PC-3 (cell line): ENCODE measurements at regions of chr1 and their contacts with region 1.

Region 1: DNA sequence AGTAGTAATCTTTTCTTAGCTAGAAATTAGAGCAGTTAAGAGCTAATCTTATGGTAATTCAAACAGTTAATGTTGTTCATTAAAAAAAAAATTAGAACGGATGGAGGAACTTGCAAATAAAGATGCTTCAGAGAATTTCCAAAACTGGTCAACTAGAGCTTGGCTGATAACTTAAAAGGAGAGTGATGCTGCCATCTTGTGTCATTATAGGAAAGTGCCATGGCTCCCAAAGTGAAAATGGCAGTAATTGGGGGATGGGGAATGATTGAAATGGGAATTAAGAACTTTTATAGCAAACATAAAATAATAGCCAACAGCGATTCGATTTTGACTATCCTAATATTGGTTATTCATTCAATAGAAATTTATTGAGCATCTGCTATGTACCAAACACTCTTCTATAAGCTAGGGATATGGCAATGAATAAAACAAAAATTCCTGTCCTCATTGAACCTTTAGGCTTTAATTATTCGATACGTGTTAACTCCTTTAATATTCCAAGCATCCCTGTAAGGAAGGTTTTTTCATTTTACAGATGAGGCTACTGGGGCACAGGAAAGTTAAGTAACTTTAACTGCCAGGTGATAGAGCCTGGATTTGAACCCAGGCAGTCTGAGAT is 5.7 kb upstream of the PLPP3 start:
- DNase-seq: peak; percentile 78
- ATAC-seq: peak; percentile 61
- H3K4me3 ChIP-seq: no peak overlapping the region
- H3K27ac ChIP-seq: no peak overlapping the region
- H3K4me1 ChIP-seq: peaks cover 5% of the 10 kb centered on the region; the same call in 1 of the 2 replicates
- H3K27me3 ChIP-seq: no peaks in the 10 kb centered on the region
- CTCF ChIP-seq: peak; percentile 90

Region 2: GRCh38 chr1:55140546-55140983 is 1444.5 kb before region 1 on chr1:
- CTCF ChIA-PET with region 1: no interaction called
- POLR2A ChIA-PET with region 1: no interaction called
- intact Hi-C with region 1: loop called (anchors 2 kb)
- DNase-seq: peak; percentile 92
- ATAC-seq: peak; percentile 97
- H3K4me3 ChIP-seq: no peak overlapping the region
- H3K27ac ChIP-seq: no peak overlapping the region
- H3K4me1 ChIP-seq: peaks cover 5% of the 10 kb centered on the region; the same call in 1 of the 2 replicates
- H3K27me3 ChIP-seq: no peaks in the 10 kb centered on the region
- CTCF ChIP-seq: peak; percentile 90

Region 3: DNA sequence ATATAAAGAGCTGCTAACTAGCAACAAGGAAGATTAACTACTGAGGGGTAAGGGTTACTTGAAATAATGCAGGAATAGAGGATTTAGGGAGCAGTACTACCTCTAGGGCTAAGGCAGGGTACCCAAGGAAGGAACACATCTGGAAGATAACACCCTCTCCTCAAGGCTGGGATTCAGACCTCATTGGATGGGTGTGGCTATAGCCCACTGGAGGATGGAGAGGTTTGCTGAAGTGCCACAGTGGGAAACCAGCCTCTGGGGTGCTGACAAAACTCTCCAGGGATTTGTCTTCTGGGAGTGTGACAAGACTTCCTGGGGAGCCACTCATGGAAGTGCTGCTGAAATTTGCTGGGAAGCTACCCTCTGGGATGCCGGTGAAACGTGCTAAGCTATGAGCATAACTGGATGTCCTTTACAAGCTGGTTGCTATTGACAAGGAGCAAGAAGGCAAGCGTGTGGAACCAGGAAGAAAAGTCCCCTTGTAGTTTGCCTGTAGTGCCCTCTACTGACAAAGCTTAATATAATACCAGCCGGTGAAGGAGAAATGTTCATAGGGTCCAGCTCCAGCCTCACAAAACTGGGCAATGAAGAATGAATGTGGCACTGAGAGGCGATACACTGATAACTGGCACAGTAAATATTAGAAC is 1247.1 kb before region 1 on chr1:
- CTCF ChIA-PET with region 1: no interaction called
- POLR2A ChIA-PET with region 1: no interaction called
- intact Hi-C with region 1: loop called (anchors 1 kb)
- DNase-seq: peak; percentile 72
- ATAC-seq: peak; percentile 83
- H3K4me3 ChIP-seq: no peak overlapping the region
- H3K27ac ChIP-seq: no peak overlapping the region
- H3K4me1 ChIP-seq: no peaks in the 10 kb centered on the region
- H3K27me3 ChIP-seq: no peaks in the 10 kb centered on the region
- CTCF ChIP-seq: peak; percentile 72

Region 4: DNA sequence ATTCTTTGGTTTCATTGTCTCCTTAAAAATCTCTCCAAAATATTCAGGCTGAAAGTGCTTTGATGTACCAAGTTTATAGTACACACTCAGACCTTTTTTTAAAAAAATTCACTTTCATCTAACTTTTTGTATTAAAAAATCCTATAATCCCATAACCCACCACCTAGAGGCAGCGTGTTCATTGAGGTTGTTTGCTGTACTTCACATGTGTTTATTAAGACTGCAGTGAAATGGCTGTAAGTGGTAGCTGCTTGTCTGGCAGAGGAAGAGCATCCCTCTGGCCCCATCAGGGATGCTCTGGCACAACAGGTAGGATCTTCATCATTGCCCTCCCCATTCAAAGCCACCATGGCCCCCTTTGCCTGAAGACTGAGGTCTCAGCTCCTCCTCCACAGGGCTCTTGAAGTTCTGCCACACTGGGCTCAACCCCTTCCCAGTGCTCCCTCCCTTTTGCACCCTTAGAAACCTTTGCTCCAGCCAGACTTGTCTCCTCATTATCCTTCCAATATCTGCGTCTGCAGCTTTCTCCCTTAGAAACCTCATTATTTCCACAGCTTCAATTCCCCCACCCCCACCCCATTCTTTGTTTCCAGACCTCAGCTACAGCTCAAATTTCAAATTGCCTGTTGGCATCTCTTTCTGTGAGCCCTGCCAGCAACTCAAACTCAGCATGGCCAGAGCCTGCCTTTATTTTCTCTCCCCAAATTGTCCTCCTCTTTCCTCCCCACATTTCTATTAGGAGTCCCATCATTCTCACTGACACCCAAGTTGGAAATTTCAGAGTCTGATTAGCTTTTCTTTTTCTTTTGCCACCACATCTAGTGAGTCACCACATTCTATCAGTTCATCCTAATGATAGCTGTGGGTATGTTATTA is 1000.3 kb before region 1 on chr1:
- CTCF ChIA-PET with region 1: no interaction called
- POLR2A ChIA-PET with region 1: no interaction called
- intact Hi-C with region 1: loop called (anchors 10 kb)
- DNase-seq: peak; percentile 29
- ATAC-seq: peak; percentile 50
- H3K4me3 ChIP-seq: no peak overlapping the region
- H3K27ac ChIP-seq: no peak overlapping the region
- H3K4me1 ChIP-seq: peaks cover 22% of the 10 kb centered on the region
- H3K27me3 ChIP-seq: no peaks in the 10 kb centered on the region
- CTCF ChIP-seq: peak; percentile 50

Region 5: GRCh38 chr1:56291374-56291919 is 293.6 kb before region 1 on chr1:
- CTCF ChIA-PET with region 1: no interaction called
- POLR2A ChIA-PET with region 1: no interaction called
- intact Hi-C with region 1: no loop called
- DNase-seq: no peak
- ATAC-seq: no peak
- H3K4me3 ChIP-seq: no peak overlapping the region
- H3K27ac ChIP-seq: no peak overlapping the region
- H3K4me1 ChIP-seq: 0 out of 2 replicates have a peak, but pooled peaks cover 4% of the 10 kb centered on the region
- H3K27me3 ChIP-seq: no peaks in the 10 kb centered on the region
- CTCF ChIP-seq: no peak

Region 6: DNA sequence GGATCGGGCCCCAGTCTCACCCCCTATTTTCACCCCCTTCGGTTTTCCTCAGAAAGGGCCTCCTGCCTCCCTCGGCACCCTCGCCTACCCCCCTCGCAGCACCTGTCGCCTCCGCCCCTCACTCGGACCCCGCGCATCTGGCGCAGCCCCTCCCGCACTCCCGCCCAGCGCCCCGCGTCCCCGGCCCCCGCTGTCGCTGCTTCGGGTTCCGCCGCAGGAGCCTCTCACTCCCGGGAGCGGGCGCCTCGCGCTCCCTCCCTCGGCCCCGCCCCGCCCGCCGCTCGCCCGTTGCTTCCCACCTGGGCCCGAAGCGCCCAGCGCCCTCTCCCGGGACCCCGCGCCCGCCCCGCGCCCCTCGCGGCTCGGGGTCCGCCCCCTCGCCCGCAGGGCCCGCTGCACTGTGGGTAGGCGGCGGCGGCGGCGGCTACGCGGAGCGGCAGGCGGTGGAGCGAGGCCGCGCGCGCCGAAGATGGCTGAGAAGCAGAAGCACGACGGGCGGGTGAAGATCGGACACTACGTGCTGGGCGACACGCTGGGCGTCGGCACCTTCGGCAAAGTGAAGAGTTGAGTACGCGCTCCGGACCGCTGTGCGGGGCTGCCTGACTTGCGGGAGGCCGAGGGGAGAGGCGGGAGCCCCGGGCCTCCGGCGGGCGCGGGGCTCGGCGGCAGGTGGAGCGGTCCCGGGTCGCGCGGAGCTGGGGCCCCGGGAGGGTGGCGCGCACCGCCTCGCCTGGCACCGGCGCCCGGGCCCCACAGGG is 60.1 kb after region 1 on chr1 and contains the start of gene PRKAA2:
- CTCF ChIA-PET with region 1: no interaction called
- POLR2A ChIA-PET with region 1: no interaction called
- intact Hi-C with region 1: loop called (anchors 5 kb)
- DNase-seq: peak; percentile 52
- ATAC-seq: peak; percentile 69
- H3K4me3 ChIP-seq: peak within 1 kb of the TSS; percentile 82
- H3K27ac ChIP-seq: peak within 1 kb of the TSS; percentile 32
- H3K4me1 ChIP-seq: peaks cover 13% of the 10 kb centered on the region
- H3K27me3 ChIP-seq: no peaks in the 10 kb centered on the region
- CTCF ChIP-seq: no peak
- total RNA-seq, gene PRKAA2: 3.4 and 4.5 TPM in 2 replicates

Region 7: DNA sequence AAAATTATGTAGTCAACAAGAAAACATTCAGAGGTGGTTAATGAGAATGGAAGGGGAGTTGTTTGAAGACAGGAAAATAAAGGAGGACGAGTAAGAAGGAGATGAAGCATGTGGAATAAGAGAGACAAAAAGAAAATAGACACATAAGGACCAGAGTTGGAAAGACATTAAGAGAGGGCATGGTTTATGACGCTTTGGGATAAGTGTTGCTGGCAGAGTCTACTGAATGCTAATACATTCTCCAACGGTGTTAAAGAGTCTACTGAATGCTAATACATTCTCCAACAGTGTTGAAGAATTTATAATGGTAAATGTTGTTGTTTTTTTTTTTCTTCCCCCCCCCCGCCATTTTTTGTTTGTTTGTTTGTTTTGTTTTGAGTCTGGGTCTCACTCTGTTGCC is 73.2 kb after region 1 on chr1:
- CTCF ChIA-PET with region 1: no interaction called
- POLR2A ChIA-PET with region 1: no interaction called
- intact Hi-C with region 1: no loop called
- DNase-seq: no peak
- ATAC-seq: no peak
- H3K4me3 ChIP-seq: no peak overlapping the region
- H3K27ac ChIP-seq: no peak overlapping the region
- H3K4me1 ChIP-seq: no peaks in the 10 kb centered on the region
- H3K27me3 ChIP-seq: no peaks in the 10 kb centered on the region
- CTCF ChIP-seq: no peak

Region 8: DNA sequence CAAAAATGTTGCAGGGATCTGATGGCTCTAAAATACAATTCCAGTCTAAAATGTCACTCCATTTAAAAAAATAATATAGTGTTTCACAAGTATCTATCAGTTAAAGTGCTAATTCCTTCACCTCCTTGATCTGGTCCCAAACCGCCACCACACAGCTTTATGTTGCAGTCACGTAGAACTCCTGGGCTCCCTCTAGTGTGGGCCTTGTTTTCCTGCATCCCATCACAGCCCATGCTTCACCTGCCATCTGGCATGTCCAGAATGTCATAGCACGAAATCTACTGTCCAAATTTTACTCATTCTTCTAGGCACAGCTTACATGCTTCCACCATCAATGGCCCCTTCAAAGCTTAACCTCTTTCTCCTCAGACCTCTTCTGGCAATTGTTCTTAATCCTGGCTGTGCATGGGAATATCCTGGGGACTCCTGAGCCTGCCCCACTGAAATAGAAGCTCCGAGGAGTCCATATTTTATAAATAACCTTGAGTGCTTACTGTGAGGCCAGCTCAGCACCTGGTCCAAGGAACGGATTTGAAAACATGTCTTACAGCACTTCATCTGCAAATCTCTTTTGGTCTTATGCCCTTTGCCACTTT is 218.6 kb after region 1 on chr1:
- CTCF ChIA-PET with region 1: interaction called, 4 read pairs
- POLR2A ChIA-PET with region 1: no interaction called
- intact Hi-C with region 1: loop called (anchors 5 kb)
- DNase-seq: peak; percentile 67
- ATAC-seq: peak; percentile 96
- H3K4me3 ChIP-seq: no peak overlapping the region
- H3K27ac ChIP-seq: no peak overlapping the region
- H3K4me1 ChIP-seq: no peaks in the 10 kb centered on the region
- H3K27me3 ChIP-seq: no peaks in the 10 kb centered on the region
- CTCF ChIP-seq: peak; percentile 80